ENCODE measurements at regions of chr9 and their contacts with region 1.

Region 1: DNA sequence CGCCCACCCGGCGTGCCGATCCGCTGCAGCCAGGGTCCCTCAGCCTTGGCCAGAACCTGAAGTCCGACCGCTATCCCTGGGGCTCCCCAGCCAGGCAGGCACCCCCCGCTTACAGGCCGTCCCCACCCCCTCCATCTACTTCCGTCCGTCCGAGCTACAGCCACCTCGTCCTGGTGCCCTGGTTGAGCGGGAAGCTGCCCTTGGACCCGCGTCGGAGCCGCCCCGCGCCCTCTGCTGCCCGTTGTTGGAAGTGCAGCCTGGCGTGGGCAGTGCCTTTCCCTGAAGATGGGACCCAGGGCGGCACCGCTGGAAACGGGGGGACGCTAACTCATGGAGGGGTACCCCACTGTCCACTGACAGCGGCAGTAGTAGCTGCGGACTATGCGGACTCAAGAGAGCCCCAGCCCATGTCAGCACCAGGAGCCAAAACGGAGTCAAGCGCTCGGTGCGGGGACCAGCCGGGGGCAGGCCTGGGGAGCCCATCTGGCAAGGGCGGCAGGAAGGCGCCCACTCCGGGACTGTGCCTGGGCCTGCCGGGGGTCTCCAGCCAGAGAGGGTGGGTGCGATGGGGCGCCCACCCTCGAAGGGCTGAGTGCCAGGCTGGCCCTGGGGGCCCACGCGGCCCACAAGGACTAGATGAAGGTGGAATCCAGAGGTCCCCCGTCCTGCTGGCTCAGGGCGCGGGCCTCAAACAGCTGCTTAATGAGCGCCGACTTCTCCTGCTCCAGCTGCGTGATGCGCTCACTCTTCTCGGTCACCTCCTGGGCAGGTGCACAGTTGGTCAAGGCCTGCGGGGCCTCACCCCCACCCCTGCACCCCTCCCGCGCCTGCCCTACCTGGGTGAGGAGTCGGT is 6.1 kb downstream of the SAPCD2 start:
- DNase-seq: peak; percentile 84
- ATAC-seq: peak; percentile 51
- H3K4me3 Mint-ChIP-seq: no peak overlapping the region
- H3K27ac Mint-ChIP-seq: no peak overlapping the region
- H3K4me1 Mint-ChIP-seq: peaks cover 12% of the 10 kb centered on the region
- H3K27me3 Mint-ChIP-seq: peaks cover 6% of the 10 kb centered on the region
- CTCF ChIP-seq: peak; percentile 99

Region 2: DNA sequence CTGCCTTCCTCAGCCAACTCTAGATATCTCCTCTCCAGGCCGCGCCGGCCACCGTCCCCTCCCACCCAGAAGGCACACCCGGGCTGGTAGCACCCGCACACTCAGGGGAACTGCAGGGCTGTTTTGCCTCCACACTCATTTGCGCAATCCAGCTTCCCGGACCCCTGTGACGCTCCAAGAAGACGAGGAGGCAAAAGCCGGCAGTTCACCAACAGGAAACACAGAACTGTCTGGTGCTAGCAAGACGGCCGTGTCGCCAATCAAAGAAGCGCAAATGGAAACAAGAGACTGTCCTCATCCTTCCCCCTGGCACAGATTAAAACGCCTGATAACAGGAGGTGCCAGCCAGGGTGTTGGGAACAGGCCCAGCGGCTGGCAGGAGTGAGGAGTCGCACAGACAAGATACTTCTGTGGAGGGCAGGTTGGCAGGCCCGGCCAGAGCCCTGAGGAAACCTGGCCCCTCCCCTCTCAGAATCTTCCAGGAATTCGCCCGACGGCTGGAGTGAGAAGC is 384.8 kb before region 1 on chr9:
- CTCF ChIA-PET with region 1: no interaction called
- POLR2A ChIA-PET with region 1: no interaction called
- DNase-seq: no peak
- ATAC-seq: no peak
- H3K4me3 Mint-ChIP-seq: no peak overlapping the region
- H3K27ac Mint-ChIP-seq: no peak overlapping the region
- H3K4me1 Mint-ChIP-seq: peaks cover 5% of the 10 kb centered on the region; the same call in 1 of the 2 replicates
- H3K27me3 Mint-ChIP-seq: no peaks in the 10 kb centered on the region
- CTCF ChIP-seq: no peak

Region 3: DNA sequence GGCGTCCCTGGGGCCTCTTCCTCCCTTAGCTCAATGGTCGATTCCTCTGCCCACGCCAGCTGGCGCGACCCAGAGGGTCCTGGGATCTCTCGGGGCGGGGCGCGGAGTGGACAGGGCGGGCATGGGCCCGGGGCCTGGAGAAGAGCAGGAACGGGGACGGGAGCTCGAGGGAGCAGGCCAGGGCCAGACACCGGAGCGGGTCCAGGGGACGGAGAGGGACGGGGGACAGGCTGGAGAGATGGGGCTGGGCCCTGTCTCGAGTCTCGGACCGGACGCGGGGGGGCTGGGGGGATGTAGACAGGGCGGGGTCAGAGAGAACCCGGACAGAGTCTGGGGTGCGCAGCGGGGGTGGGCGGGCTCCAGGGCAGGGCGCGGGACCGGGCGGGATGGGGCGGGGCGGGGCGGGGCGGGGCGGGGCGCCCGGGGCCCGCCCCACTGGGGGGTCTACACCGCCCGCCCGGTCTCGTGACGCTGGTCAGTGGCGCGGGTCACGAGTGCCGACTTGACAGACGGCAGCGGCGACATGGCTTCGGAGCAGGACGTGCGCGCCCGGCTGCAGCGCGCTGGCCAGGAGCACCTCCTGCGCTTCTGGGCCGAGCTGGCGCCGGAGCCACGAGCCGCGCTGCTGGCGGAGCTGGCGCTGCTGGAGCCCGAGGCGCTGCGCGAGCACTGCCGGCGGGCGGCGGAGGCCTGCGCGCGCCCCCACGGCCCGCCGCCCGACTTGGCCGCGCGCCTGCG is 12.9 kb after region 1 on chr9 and contains the start of gene UAP1L1:
- CTCF ChIA-PET with region 1: interaction called, 240 read pairs
- POLR2A ChIA-PET with region 1: no interaction called
- DNase-seq: peak; percentile 64
- ATAC-seq: peak; percentile 29
- H3K4me3 Mint-ChIP-seq: peak within 1 kb of the TSS; percentile 69
- H3K27ac Mint-ChIP-seq: no peak within 1 kb of the TSS
- H3K4me1 Mint-ChIP-seq: peaks cover 16% of the 10 kb centered on the region
- H3K27me3 Mint-ChIP-seq: peaks cover 36% of the 10 kb centered on the region
- CTCF ChIP-seq: no peak
- total RNA-seq, gene UAP1L1: 12.1 to 17.7 TPM (median 14.3 TPM) in 3 replicates

Region 4: DNA sequence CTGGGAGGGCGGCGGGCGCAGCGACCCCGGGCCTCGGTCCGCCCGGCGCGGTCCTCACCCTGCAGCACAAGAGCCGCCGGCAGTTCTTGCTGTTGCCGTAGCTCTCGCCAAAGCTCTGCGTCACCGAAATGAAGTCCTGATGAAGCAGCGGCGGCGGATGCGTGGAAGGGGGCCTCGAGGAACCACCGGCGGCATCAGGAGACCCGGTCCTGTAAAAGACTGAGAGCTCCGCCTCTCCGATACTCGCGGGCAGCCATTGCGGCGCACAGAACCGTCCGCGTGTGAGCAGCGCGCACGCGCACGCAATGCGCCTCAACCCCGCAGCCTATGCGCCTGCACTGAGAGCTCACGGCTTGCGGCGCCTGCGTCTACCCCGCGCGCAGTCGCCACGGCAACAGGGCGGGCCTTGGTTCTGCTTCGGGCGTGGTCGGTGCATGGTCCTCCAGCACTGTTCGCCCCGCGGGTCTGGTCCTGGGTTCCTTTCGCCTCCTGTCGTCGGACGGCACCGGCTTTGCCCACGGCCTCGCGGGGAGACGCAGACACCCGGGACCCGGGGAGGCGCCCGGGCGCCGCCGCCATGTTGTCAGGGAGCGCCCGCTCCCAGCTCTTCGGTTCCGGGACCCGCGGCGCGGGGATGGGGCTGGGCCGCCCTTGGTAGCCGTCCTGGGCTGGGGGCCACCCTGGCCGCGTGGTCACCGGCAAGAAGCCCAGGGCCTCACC is 65.4 kb after region 1 on chr9:
- CTCF ChIA-PET with region 1: interaction called, 14 read pairs
- POLR2A ChIA-PET with region 1: no interaction called
- DNase-seq: peak; percentile 87
- ATAC-seq: peak; percentile 96
- H3K4me3 Mint-ChIP-seq: peak overlapping the region; percentile 78
- H3K27ac Mint-ChIP-seq: no peak overlapping the region
- H3K4me1 Mint-ChIP-seq: peaks cover 14% of the 10 kb centered on the region
- H3K27me3 Mint-ChIP-seq: peaks cover 23% of the 10 kb centered on the region
- CTCF ChIP-seq: no peak

Measured in WTC11 (cell line).